ENCODE measurements at regions of chr17 and their contacts with region 1.

Region 1: GRCh38 chr17:8057691-8058114 is 18.8 kb downstream of the ALOX15B start:
- DNase-seq: peak; percentile 80

Region 2: DNA sequence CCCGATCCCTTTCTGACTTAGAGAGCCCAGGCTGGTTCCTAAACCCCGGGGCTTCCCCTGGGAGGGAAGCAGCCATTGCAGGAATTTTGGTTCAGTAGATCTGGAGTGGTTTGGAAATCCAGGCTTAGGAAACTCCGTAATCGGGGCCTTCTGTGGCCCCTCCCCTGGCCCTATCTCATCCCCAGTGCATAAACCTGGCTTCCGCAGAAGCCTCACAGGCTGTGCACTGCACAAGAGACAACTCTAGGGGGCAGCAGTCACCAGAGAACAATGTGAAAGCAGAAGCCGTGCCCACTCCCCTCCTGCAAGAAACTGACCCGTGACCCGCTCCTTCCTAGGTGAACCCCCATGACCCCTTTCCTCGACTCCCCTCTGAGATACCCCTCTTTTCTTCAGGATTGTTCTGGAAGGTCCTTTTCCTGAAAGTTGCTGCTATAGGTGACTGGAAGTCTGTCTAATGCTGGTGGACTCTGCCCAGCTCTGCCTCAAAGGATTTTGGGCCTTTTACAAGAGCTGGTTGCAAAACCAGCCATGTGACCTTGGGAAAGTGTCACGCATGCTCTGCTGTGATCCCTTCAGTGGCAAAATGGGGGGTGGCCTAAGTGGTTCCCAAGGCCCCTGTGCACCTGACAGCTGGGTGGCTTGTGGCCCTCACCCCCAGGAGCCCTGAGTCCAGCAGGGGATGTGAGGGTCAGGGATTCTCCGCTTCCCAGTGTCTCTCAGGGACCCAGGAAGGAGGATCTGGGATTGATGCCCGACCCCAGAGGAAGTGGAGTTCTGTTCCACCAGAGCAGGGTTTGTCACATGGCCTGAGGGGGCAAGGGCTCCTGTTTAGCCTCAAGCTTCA is 40.8 kb before region 1 on chr17:
- CTCF ChIA-PET with region 1: interaction called, 28 read pairs
- POLR2A ChIA-PET with region 1: no interaction called
- DNase-seq: peak; percentile 76

Region 3: DNA sequence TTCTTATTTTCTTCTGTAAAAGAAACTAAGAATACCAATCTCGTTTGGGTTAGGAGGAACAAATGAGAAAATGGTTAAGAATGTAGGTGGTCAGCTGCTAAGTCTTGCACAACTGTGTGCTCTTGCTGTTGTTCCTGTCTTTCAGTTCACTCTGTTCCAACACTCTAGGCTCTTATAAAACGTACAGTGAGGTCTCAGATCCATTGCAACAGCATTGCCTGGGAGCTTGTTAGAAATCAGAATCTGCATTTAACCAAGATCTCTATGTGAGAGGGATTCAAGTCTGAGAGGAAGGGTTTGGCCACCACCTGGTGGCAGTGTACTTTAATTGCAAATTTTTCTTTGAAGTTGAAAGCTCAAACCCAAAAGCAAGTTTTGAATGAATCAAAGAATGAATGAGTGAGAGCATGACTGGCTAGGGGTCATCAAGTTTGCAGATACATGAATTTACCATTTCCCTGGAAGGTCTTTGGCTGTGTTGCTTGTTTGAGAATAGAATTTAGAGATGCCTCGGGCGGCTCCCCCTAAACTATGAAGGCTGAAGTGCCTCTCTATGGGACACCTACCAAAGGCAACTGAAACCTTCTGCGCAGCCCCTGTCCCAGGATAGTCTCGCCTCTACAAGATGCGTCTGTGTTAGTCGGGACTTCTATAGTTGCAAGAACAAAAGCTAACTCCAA is 16.3 kb before region 1 on chr17:
- CTCF ChIA-PET with region 1: interaction called, 12 read pairs
- POLR2A ChIA-PET with region 1: no interaction called
- DNase-seq: peak; percentile 42

Region 4: GRCh38 chr17:8073627-8074484 is 16.2 kb after region 1 on chr17:
- CTCF ChIA-PET with region 1: interaction called, 24 read pairs
- POLR2A ChIA-PET with region 1: interaction called, 4 read pairs
- DNase-seq: peak; percentile 85

Region 5: DNA sequence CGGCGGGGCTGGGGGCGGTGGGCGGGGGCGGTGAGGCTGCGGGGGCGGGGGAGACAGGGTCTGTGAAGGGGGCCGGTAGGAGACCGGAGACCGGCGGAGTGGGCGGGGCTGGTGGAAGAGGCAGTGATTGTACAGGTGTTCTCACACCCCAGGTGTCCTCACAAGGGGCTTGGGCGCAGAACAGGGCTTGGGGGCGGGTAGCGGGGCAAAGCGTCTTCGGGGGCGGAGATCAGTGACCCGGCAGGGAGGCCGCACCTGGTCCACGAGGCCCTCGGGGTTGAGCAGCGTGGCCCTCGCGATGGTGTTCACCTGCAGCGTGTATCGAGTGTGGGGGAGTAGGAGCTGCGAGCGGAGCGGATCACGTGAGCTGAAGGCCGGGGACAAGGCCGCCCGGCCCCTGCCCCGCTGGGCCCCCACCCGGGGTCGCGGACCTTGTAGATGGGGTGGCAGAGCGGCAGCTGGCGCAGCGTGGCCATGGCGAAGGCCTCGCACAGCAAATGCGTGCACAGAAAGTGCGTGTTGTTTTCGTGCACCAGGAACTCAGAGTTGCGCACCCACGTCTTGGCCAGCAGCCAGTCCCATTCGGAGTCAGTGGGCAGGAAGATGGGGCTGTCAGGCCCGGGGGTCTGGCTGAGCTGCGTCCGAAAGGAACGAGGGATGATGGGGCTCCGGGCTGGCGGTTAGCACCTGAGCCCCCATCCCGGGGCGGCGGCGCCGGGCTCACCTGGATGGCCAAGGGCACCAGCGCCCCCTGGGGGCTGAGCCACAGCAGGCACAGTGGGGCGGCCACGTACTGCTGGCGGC is 52.2 kb after region 1 on chr17:
- CTCF ChIA-PET with region 1: interaction called, 15 read pairs
- POLR2A ChIA-PET with region 1: interaction called, 3 read pairs
- DNase-seq: peak; percentile 79

Region 6: GRCh38 chr17:8118769-8119580 is 61.3 kb after region 1 on chr17:
- CTCF ChIA-PET with region 1: interaction called, 13 read pairs
- POLR2A ChIA-PET with region 1: interaction called, 3 read pairs
- DNase-seq: peak; percentile 81

Measured in HEK293T (cell line).